Activated naive CD4-positive, alpha-beta T cell treated with anti-CD3 and anti-CD28 coated beads for 36 hours (primary cell): ENCODE measurements at regions of chr10 and their contacts with region 1.

Region 1: GRCh38 chr10:32041290-32042028 is 14.8 kb downstream of the KIF5B start:
- DNase-seq: no peak
- H3K4me3 Mint-ChIP-seq: no peak overlapping the region
- H3K27ac Mint-ChIP-seq: peak overlapping the region; percentile 32
- H3K4me1 Mint-ChIP-seq: peaks cover 50% of the 10 kb centered on the region
- H3K27me3 Mint-ChIP-seq: no peaks in the 10 kb centered on the region

Region 2: GRCh38 chr10:32023264-32023663 is 18.2 kb before region 1 on chr10:
- CTCF ChIA-PET with region 1: no interaction called
- intact Hi-C with region 1: loop called (anchors 2 kb)
- DNase-seq: no peak
- H3K4me3 Mint-ChIP-seq: no peak overlapping the region
- H3K27ac Mint-ChIP-seq: peak overlapping the region; percentile 42
- H3K4me1 Mint-ChIP-seq: peaks cover 2% of the 10 kb centered on the region
- H3K27me3 Mint-ChIP-seq: no peaks in the 10 kb centered on the region

Region 3: GRCh38 chr10:32055813-32056600 is 14.5 kb after region 1 on chr10 and contains the start of gene KIF5B:
- CTCF ChIA-PET with region 1: no interaction called
- intact Hi-C with region 1: loop called (anchors 1 kb)
- DNase-seq: peak; percentile 84
- H3K4me3 Mint-ChIP-seq: peak within 1 kb of the TSS; percentile 96
- H3K27ac Mint-ChIP-seq: peak within 1 kb of the TSS; percentile 92
- H3K4me1 Mint-ChIP-seq: peaks cover 39% of the 10 kb centered on the region
- H3K27me3 Mint-ChIP-seq: no peaks in the 10 kb centered on the region
- total RNA-seq, gene KIF5B: 64.9 to 67.8 TPM